ENCODE measurements at regions of chr19 and their contacts with region 1.

Region 1: DNA sequence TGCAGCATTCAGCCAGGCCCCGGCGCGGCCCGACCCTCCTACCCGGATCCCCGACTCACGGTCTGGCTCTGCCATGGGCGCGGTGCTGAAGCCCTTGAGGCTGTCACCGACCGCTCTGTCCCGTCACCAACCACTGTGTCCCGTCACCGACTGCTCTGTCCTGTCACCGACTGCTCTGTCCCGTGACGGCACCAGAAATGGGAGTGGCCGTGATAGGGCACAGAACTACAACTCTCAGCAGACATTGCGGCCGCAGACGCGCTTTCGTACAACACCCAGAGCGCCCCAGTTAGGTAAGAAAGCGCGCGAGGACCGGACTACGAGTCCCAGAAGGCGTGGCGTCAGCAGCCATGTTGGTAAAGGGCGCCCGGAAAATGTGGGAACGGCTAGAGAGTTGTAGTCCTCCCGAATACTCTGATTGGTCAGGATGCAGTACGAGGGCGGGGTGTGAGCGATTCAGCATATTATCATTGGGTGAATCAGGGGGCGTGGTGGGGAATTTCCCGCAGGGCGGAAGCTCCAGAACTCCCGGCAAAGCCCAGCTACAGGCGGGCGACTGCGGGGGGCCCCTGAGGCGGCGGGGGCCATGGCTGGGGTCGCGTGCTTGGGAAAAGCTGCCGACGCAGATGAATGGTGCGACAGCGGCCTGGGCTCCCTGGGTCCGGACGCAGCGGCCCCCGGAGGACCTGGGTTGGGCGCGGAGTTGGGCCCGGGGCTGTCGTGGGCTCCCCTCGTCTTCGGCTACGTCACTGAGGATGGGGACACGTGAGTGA is at the starts of genes NFKBIB and SIRT2:
- DNase-seq: peak; percentile 100
- H3K4me3 ChIP-seq: peak within 1 kb of the TSS; percentile 79 to 95 (median 91)
- H3K27ac ChIP-seq: peak within 1 kb of the TSS; percentile 91 to 94 (median 93)
- H3K4me1 ChIP-seq: peaks cover 7 to 28% (median 20%) of the 10 kb centered on the region in 4 donors
- H3K27me3 ChIP-seq: no peaks in the 10 kb centered on the region
- CTCF ChIP-seq: no peak
- EP300 ChIP-seq: no peak
- POLR2A ChIP-seq: peak; percentile 85
- total RNA-seq, gene NFKBIB: 6.2 to 53.9 (median 29.4) TPM
- total RNA-seq, gene SIRT2: 56.3 to 128 (median 64.2) TPM

Region 2: DNA sequence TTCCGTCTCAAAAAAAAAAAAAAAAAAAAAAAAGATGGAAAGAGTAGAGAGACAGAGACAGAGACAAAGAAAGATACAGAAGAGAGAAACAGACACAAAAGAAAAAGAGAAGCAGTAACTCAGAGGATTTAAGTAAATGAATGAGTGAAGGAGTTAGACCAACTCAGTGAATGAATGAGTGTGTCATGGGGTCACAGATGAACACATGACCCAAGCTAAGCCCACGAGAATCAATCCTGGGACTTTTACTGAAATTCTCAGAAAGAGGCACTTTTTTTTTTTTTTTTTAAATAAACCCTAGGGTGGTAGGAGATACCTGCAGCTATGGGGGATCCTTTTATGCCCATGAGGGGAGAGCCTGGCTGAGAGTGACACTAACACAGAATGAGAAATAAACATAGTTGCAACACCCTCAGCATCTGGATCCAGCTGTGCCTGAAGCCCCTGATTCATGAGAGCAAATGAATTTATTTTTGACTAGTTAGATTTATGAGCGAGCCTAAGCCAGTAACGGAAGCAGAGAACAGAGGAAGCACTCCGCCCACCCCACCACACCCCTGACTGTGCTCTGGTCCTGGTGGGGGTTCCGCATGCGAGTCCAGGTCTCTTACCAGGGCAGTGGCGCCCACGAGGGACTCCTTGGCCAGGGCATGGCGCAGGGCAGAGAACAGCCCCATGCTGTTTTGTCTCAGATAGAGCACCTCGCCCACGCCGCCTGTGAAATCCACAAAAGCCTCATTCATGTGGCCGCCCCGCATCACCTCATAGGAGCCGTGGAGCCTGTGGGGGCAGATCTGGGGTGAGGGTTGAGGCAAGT is 160.0 kb before region 1 on chr19:
- in situ Hi-C with region 1: loop called in 1 of 4 experiments (anchors 10 kb)
- intact Hi-C with region 1: no loop called
- DNase-seq: no peak
- H3K4me3 ChIP-seq: no peak overlapping the region
- H3K27ac ChIP-seq: no peak overlapping the region
- H3K4me1 ChIP-seq: peaks cover 0 to 21% (median 18%) of the 10 kb centered on the region in 4 donors
- H3K27me3 ChIP-seq: no peaks in the 10 kb centered on the region
- CTCF ChIP-seq: no peak
- EP300 ChIP-seq: no peak
- POLR2A ChIP-seq: no peak

Region 3: GRCh38 chr19:39007091-39007490 is 107.5 kb after region 1 on chr19:
- in situ Hi-C with region 1: no loop called
- intact Hi-C with region 1: no loop called
- DNase-seq: no peak
- H3K4me3 ChIP-seq: no peak overlapping the region
- H3K27ac ChIP-seq: no peak overlapping the region
- H3K4me1 ChIP-seq: no peaks in the 10 kb centered on the region
- H3K27me3 ChIP-seq: no peaks in the 10 kb centered on the region
- CTCF ChIP-seq: no peak
- EP300 ChIP-seq: no peak
- POLR2A ChIP-seq: no peak

Region 4: GRCh38 chr19:40365613-40366401 is 1466.2 kb after region 1 on chr19:
- in situ Hi-C with region 1: no loop called
- intact Hi-C with region 1: no loop called
- DNase-seq: peak; percentile 50
- H3K4me3 ChIP-seq: peak overlapping the region in 3 of 4 donors; percentile 6 to 34 (median 18)
- H3K27ac ChIP-seq: peak overlapping the region in 3 of 4 donors; percentile 9 to 41 (median 28)
- H3K4me1 ChIP-seq: peaks cover 0 to 18% (median 0%) of the 10 kb centered on the region in 4 donors
- H3K27me3 ChIP-seq: no peaks in the 10 kb centered on the region
- CTCF ChIP-seq: no peak
- EP300 ChIP-seq: no peak
- POLR2A ChIP-seq: peak; percentile 15